Prostate gland (tissue), 2 donors: ENCODE measurements at regions of chr12 and their contacts with region 1.

Region 1: GRCh38 chr12:119115296-119115905 is 63.3 kb upstream of the HSPB8 start:
- DNase-seq: peak; percentile 20
- H3K4me3 ChIP-seq: no peak overlapping the region
- H3K27ac ChIP-seq: no peak overlapping the region
- H3K4me1 ChIP-seq: no peaks in the 10 kb centered on the region
- H3K27me3 ChIP-seq: no peaks in the 10 kb centered on the region
- CTCF ChIP-seq: peak; percentile 68 to 93 (median 74)
- POLR2A ChIP-seq: no peak

Region 2: DNA sequence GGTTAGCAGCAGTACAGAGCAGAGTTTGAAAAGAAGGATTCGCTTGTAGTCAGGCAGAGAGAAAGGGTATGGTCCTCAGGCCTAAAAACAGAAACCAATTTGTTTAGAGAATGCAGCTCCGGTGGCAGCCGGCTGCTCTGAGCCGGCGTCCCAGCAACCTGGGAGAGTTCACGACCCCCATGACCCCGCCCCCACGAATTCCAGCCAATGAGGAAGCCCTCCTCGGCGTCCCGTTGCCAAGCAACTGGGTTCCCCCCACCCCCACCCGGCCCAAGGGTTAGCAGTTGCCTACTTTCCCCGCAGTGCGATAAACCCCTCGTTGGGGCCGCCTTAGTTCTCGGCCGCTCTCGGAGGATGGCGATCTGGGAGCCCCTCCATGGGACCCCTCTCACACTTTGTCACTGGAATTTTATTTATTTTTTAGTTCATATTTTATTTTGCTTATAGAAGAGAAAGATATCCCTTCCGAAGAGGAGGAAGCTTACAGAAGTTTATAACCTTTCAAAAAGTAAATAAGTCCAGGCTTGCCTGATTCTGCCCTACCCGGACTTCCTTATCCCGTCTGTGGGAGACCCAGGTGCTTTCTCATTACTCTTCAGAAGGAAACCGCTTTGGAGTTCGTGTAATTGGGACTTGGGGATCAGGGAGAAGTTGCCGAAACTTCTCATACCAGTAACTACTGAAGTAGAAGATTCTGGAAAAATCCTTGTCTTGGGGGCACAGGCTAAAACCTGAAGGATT is 219.2 kb after region 1 on chr12 and contains the start of gene CCDC60:
- intact Hi-C with region 1: loop called (anchors 10 kb)
- DNase-seq: peak; percentile 64
- H3K4me3 ChIP-seq: peak within 1 kb of the TSS in 1 of 2 donors; percentile 22
- H3K27ac ChIP-seq: no peak within 1 kb of the TSS
- H3K4me1 ChIP-seq: no peaks in the 10 kb centered on the region
- H3K27me3 ChIP-seq: no peaks in the 10 kb centered on the region
- CTCF ChIP-seq: no peak
- POLR2A ChIP-seq: no peak
- total RNA-seq, gene CCDC60: 4.3 to 4.9 TPM

Region 3: DNA sequence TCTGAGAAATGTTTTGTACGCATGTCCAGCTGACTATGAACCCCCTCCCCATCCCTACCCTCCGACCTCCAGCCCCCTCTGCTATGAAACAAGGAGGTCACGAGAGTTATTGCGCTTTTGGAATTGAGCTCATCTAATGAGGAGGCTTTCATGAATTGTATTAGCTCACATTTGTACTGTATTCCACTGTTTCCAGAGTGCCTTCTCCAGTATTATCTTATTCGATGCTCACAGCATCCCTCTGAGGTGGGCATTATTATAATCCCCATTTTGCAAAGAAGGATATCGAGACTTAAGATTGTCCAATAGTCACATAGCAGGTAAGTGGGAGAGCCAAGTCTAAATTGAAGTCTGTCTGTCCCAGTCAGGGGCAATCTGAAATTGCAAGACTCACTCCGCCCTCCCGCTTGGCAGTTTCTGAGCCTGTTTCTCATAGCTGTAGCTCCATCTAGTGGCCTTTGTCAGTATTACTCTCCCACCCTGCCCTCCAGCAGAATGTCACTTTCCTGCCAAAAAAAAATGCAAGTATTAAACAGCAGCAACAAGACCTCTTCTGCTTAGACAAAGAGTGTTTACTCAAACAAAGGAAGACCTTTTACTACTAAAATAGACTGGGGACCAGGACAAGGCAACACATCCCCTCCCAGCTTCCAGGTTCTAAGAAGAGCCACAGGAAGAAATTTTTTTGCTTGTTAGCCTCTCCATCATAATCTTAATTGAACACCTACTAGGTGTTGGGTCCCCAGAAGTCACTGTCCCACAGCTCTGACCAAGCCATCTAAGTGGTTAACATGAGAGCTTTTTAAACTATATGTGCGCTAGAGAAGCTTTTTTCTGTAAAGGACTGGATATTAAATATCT is 429.6 kb after region 1 on chr12:
- intact Hi-C with region 1: loop called (anchors 2 kb)
- DNase-seq: peak; percentile 67
- H3K4me3 ChIP-seq: no peak overlapping the region
- H3K27ac ChIP-seq: no peak overlapping the region
- H3K4me1 ChIP-seq: no peaks in the 10 kb centered on the region
- H3K27me3 ChIP-seq: no peaks in the 10 kb centered on the region
- CTCF ChIP-seq: peak; percentile 73 to 85 (median 82)
- POLR2A ChIP-seq: no peak